Ovary (tissue), 10 donors: ENCODE measurements at regions of chr1 and their contacts with region 1.

Region 1: DNA sequence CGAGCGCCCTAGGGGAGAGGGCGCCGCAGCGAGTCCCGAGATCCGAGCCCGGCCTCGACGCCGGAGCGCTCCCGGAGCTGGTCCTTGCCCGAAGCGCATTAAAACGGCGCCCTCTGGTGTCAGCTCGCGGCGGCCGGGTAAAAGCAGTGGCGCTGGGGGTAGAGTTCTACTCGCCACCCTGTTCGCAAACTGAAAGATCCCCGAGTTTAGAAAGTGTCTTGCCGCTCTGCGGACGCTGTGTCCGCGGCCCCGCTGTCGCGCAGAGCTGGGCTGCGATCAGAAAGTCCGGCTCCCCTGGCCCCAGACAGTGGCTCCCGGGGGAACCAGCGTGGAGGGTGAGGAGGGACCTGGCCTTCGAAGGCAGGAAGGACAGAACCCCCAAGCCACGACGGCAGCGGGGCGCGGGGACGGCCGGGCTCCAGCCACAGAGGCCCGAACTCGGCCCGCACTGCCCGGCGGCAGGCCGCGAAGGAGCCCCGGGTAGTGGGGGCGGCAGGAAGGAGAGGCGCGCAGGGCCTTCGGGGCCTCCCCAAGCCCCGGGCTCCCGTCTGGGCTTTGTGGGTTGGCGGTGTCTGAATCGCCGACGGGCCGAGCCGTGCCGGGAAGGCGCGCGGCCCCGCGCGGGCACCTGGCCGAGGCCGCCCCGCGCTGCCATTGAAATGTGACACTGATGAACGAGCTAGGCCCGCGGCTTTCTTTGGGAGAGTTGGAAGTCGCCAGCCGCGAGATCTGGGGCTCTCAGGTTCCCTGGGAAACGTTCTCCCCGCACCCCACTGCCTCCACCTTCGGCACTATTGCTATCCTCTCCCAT is 39.1 kb upstream of the NFIA start:
- DNase-seq: peak; percentile 84 to 93 (median 91)
- H3K4me3 ChIP-seq: peak overlapping the region; percentile 48
- H3K27ac ChIP-seq: peak overlapping the region in 1 of 2 donors; percentile 50
- H3K4me1 ChIP-seq: no peaks in the 10 kb centered on the region
- H3K27me3 ChIP-seq: no peaks in the 10 kb centered on the region
- CTCF ChIP-seq: peak; percentile 79 to 87 (median 86)
- EP300 ChIP-seq: no peak
- POLR2A ChIP-seq: peak; percentile 14

Region 2: DNA sequence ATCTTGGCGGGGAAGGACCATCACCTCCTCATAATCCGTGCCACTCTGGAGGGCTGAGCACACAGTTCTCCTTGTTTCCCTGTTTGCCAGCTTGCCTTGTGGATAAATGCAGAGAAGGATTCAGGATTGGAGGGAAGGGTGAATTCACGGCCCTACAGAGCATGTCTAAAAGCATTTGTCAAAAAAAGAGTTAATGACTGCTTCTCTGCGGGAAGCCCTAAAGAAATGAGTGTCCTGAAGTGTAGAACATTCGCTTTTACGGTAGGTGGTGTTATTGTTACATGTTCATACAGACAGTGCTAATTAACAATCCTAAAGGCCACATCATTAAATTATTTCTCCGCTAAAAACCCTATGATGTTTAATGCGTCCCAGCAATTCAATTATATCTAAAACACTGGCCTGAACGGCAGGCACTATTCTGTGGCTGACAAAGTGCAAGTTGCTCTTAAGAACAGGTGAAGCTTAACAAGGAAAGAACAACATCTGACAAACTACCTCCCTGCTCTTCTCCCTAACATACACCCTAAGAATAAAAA is 73.2 kb before region 1 on chr1:
- intact Hi-C with region 1: loop called (anchors 2 to 5 kb)
- DNase-seq: no peak
- H3K4me3 ChIP-seq: no peak overlapping the region
- H3K27ac ChIP-seq: no peak overlapping the region
- H3K4me1 ChIP-seq: peaks cover 2% of the 10 kb centered on the region
- H3K27me3 ChIP-seq: no peaks in the 10 kb centered on the region
- CTCF ChIP-seq: peak in 2 of 3 donors; percentile 68 to 84
- EP300 ChIP-seq: no peak
- POLR2A ChIP-seq: no peak

Region 3: DNA sequence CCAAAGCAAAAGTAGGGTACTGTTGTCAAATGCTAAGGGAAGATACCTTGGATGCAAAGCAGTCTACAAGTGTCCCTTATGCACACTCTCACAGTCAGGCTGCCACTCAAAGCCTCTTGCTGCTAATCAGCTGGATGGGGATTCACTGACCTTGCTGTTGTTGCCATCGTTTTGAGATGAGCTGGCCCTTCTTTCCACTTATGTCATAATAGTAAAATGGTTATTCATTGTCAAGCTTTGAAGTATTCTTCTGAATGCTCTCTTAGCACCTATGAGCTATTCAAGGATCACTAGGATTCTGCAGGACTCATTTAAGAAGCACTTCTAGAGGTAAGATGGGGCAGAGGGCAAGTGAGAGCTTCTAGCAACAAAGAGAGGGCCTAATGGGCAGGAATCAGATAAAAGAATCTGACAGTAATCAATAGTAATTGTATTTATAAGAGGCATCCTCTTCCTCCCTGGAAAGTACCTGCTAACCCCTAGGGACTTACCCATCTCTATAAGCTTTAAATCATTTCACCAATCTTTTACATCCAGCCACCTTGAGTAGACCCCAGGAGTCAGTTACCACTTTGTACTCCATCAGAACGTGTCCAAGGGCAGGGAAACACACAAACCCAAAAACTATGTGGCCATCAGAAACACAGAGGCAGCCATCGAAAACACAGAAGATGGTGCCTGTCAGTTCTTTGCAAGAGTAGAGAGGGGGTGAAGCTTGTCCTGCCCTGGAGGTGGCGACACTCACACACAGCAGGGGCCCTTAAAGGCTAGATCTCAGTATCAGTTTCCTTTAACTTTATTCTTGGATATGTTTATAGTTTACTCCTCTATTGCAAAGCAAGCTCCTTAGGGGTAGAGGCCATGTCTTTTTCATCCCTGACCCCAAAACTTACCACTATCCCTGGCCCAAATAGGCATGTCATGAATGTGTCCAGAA is 64.5 kb before region 1 on chr1:
- intact Hi-C with region 1: loop called in 3 of 4 experiments (anchors 5 kb)
- DNase-seq: peak in 2 of 5 donors; percentile 34 to 42
- H3K4me3 ChIP-seq: no peak overlapping the region
- H3K27ac ChIP-seq: no peak overlapping the region
- H3K4me1 ChIP-seq: peaks cover 7% of the 10 kb centered on the region
- H3K27me3 ChIP-seq: no peaks in the 10 kb centered on the region
- CTCF ChIP-seq: peak in 1 of 3 donors; percentile 22
- EP300 ChIP-seq: no peak
- POLR2A ChIP-seq: no peak